ENCODE measurements at regions of chr19 and their contacts with region 1.

Region 1: GRCh38 chr19:16371540-16371986 is 46.9 kb downstream of the KLF2 start:
- DNase-seq: peak; percentile 83 to 97 (median 92)
- ATAC-seq: peak; percentile 54
- H3K4me3 ChIP-seq: peak overlapping the region; percentile 44
- H3K4me3 Mint-ChIP-seq: no peak overlapping the region
- H3K27ac ChIP-seq: peak overlapping the region; percentile 90 to 97
- H3K27ac Mint-ChIP-seq: no peak overlapping the region
- H3K4me1 ChIP-seq: peaks cover 95% of the 10 kb centered on the region
- H3K4me1 Mint-ChIP-seq: peaks cover 33% of the 10 kb centered on the region
- H3K27me3 ChIP-seq: no peaks in the 10 kb centered on the region
- H3K27me3 Mint-ChIP-seq: no peaks in the 10 kb centered on the region
- CTCF ChIP-seq: no peak

Region 2: GRCh38 chr19:16076154-16076957 is 295.2 kb before region 1 on chr19 and contains the start of gene TPM4:
- CTCF ChIA-PET with region 1: no interaction called
- POLR2A ChIA-PET with region 1: interaction called, 4 read pairs
- intact Hi-C with region 1: loop called (anchors 5 kb)
- DNase-seq: peak; percentile 46 to 94 (median 74)
- ATAC-seq: peak; percentile 26
- H3K4me3 ChIP-seq: peak within 1 kb of the TSS; percentile 87
- H3K4me3 Mint-ChIP-seq: peak within 1 kb of the TSS; percentile 85
- H3K27ac ChIP-seq: peak within 1 kb of the TSS; percentile 72 to 83
- H3K27ac Mint-ChIP-seq: peak within 1 kb of the TSS; percentile 94
- H3K4me1 ChIP-seq: peaks cover 83% of the 10 kb centered on the region
- H3K4me1 Mint-ChIP-seq: peaks cover 73% of the 10 kb centered on the region
- H3K27me3 ChIP-seq: no peaks in the 10 kb centered on the region
- H3K27me3 Mint-ChIP-seq: no peaks in the 10 kb centered on the region
- CTCF ChIP-seq: no peak
- total RNA-seq, gene TPM4: 182 to 185 TPM

Region 3: DNA sequence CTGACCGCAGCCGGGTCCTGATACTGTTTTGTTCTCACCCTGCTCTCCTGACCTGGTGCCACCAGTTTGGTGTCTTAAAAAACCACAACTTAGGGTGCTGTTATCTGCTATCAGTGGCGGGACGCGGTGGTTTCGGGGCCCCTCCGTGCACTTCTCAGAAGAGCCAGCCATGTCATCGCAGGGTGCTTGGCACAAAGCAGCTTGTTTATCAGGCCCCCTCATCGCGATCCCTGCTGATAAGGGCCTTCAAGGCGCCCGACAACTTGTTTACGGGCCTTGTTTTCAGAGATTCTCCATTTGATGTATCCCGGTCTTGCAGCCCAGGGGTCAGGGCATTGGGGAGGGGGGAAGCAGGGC is 105.0 kb before region 1 on chr19:
- CTCF ChIA-PET with region 1: interaction called, 3 read pairs
- POLR2A ChIA-PET with region 1: interaction called, 21 read pairs
- intact Hi-C with region 1: no loop called
- DNase-seq: peak; percentile 40 to 85 (median 60)
- ATAC-seq: peak; percentile 60
- H3K4me3 ChIP-seq: peak overlapping the region; percentile 20
- H3K4me3 Mint-ChIP-seq: peak overlapping the region; percentile 59
- H3K27ac ChIP-seq: peak overlapping the region in 1 of 2 donors; percentile 22
- H3K27ac Mint-ChIP-seq: peak overlapping the region; percentile 87
- H3K4me1 ChIP-seq: peaks cover 70% of the 10 kb centered on the region
- H3K4me1 Mint-ChIP-seq: peaks cover 48% of the 10 kb centered on the region
- H3K27me3 ChIP-seq: no peaks in the 10 kb centered on the region
- H3K27me3 Mint-ChIP-seq: no peaks in the 10 kb centered on the region
- CTCF ChIP-seq: no peak

Region 4: GRCh38 chr19:16324384-16325160 is 47.0 kb before region 1 on chr19 and contains the start of gene KLF2:
- CTCF ChIA-PET with region 1: interaction called, 106 read pairs
- POLR2A ChIA-PET with region 1: interaction called, 3,819 read pairs
- intact Hi-C with region 1: loop called in 1 of 2 experiments (anchors 1 kb)
- DNase-seq: peak; percentile 91 to 99 (median 94)
- ATAC-seq: peak; percentile 55
- H3K4me3 ChIP-seq: peak within 1 kb of the TSS; percentile 98
- H3K4me3 Mint-ChIP-seq: peak within 1 kb of the TSS; percentile 83
- H3K27ac ChIP-seq: peak within 1 kb of the TSS; percentile 90 to 100
- H3K27ac Mint-ChIP-seq: peak within 1 kb of the TSS; percentile 97
- H3K4me1 ChIP-seq: peaks cover 42% of the 10 kb centered on the region
- H3K4me1 Mint-ChIP-seq: peaks cover 60% of the 10 kb centered on the region
- H3K27me3 ChIP-seq: no peaks in the 10 kb centered on the region
- H3K27me3 Mint-ChIP-seq: peaks cover 24% of the 10 kb centered on the region
- CTCF ChIP-seq: no peak
- total RNA-seq, gene KLF2: 1,201 to 1,291 TPM

Region 5: DNA sequence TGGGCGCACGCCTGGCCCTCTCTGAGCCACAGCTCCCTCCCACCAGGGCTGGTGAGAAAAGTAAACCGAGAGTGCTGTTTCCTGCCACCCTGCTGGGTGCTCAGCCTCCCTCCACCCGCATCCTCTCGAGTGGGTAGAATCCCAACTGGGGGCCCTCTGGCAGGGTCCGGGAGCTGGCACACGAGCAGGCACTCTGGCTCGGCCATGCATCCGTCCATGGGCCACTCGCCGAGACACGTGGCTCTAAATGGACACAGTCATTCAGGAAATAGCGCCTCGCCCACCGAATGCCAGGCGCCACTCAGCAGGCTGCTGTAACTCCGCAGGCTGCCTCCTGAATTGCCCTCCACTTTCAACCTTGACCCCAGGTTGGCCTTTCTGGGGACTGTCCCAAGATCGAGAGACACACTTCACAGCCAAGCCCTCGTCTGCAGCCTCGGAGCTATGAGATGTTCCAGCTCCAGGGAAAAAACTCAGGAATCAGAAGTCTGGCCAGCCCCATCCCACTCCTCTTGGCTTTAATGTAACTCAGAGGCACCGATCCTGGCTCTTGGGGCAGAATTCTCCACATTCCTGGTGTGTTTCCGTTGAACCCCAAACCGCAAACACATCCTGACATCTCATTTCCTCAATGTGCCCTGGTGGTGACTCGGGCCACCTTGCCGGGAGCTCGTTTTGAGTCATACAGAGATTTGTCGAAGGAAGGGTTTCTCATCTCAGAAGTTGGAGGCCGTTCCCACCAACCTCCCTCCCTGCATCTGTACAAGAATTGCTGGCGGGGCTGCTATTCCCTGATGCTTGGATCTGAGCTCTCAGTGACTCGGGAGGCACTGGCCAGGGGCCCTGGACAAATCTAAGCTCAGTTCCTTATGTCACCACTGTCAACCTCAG is 32.8 kb before region 1 on chr19:
- CTCF ChIA-PET with region 1: interaction called, 17 read pairs
- POLR2A ChIA-PET with region 1: interaction called, 3,819 read pairs
- intact Hi-C with region 1: loop called in 1 of 2 experiments (anchors 1 kb)
- DNase-seq: peak in 12 of 14 experiments; percentile 24 to 82 (median 50)
- ATAC-seq: peak; percentile 54
- H3K4me3 ChIP-seq: peak overlapping the region; percentile 40
- H3K4me3 Mint-ChIP-seq: peak overlapping the region; percentile 90
- H3K27ac ChIP-seq: peak overlapping the region; percentile 14 to 46
- H3K27ac Mint-ChIP-seq: peak overlapping the region; percentile 93
- H3K4me1 ChIP-seq: peaks cover 77% of the 10 kb centered on the region
- H3K4me1 Mint-ChIP-seq: peaks cover 72% of the 10 kb centered on the region
- H3K27me3 ChIP-seq: no peaks in the 10 kb centered on the region
- H3K27me3 Mint-ChIP-seq: no peaks in the 10 kb centered on the region
- CTCF ChIP-seq: peak; percentile 17

Region 6: GRCh38 chr19:16382775-16383543 is 11.4 kb after region 1 on chr19:
- CTCF ChIA-PET with region 1: interaction called, 68 read pairs
- POLR2A ChIA-PET with region 1: interaction called, 469 read pairs
- intact Hi-C with region 1: loop called (anchors 1 kb)
- DNase-seq: peak; percentile 69 to 90 (median 82)
- ATAC-seq: peak; percentile 81
- H3K4me3 ChIP-seq: peak overlapping the region; percentile 19
- H3K4me3 Mint-ChIP-seq: peak overlapping the region; percentile 76
- H3K27ac ChIP-seq: peak overlapping the region; percentile 16 to 67
- H3K27ac Mint-ChIP-seq: no peak overlapping the region
- H3K4me1 ChIP-seq: peaks cover 82% of the 10 kb centered on the region
- H3K4me1 Mint-ChIP-seq: peaks cover 62% of the 10 kb centered on the region
- H3K27me3 ChIP-seq: no peaks in the 10 kb centered on the region
- H3K27me3 Mint-ChIP-seq: no peaks in the 10 kb centered on the region
- CTCF ChIP-seq: peak; percentile 92

Region 7: GRCh38 chr19:16509141-16510061 is 137.8 kb after region 1 on chr19:
- CTCF ChIA-PET with region 1: no interaction called
- POLR2A ChIA-PET with region 1: no interaction called
- intact Hi-C with region 1: no loop called
- DNase-seq: no peak
- ATAC-seq: no peak
- H3K4me3 ChIP-seq: no peak overlapping the region
- H3K4me3 Mint-ChIP-seq: no peak overlapping the region
- H3K27ac ChIP-seq: no peak overlapping the region
- H3K27ac Mint-ChIP-seq: no peak overlapping the region
- H3K4me1 ChIP-seq: no peaks in the 10 kb centered on the region
- H3K4me1 Mint-ChIP-seq: no peaks in the 10 kb centered on the region
- H3K27me3 ChIP-seq: no peaks in the 10 kb centered on the region
- H3K27me3 Mint-ChIP-seq: no peaks in the 10 kb centered on the region
- CTCF ChIP-seq: no peak

Region 8: GRCh38 chr19:17205237-17206140 is 833.9 kb after region 1 on chr19:
- CTCF ChIA-PET with region 1: no interaction called
- POLR2A ChIA-PET with region 1: no interaction called
- intact Hi-C with region 1: no loop called
- DNase-seq: peak; percentile 56 to 81 (median 63)
- ATAC-seq: peak; percentile 82
- H3K4me3 ChIP-seq: no peak overlapping the region
- H3K4me3 Mint-ChIP-seq: no peak overlapping the region
- H3K27ac ChIP-seq: no peak overlapping the region
- H3K27ac Mint-ChIP-seq: no peak overlapping the region
- H3K4me1 ChIP-seq: no peaks in the 10 kb centered on the region
- H3K4me1 Mint-ChIP-seq: no peaks in the 10 kb centered on the region
- H3K27me3 ChIP-seq: no peaks in the 10 kb centered on the region
- H3K27me3 Mint-ChIP-seq: no peaks in the 10 kb centered on the region
- CTCF ChIP-seq: peak; percentile 68

Measured in CD4-positive, alpha-beta T cell (primary cell).